WTC11 (cell line): ENCODE measurements at regions of chr10 and their contacts with region 1.

Region 1: GRCh38 chr10:97771055-97771811 is 566 bp downstream of the SFRP5 start:
- DNase-seq: peak; percentile 64
- ATAC-seq: peak; percentile 68
- H3K4me3 Mint-ChIP-seq: peak overlapping the region; percentile 76
- H3K27ac Mint-ChIP-seq: no peak overlapping the region
- H3K4me1 Mint-ChIP-seq: peaks cover 8% of the 10 kb centered on the region
- H3K27me3 Mint-ChIP-seq: peaks cover 63% of the 10 kb centered on the region
- CTCF ChIP-seq: no peak

Region 2: DNA sequence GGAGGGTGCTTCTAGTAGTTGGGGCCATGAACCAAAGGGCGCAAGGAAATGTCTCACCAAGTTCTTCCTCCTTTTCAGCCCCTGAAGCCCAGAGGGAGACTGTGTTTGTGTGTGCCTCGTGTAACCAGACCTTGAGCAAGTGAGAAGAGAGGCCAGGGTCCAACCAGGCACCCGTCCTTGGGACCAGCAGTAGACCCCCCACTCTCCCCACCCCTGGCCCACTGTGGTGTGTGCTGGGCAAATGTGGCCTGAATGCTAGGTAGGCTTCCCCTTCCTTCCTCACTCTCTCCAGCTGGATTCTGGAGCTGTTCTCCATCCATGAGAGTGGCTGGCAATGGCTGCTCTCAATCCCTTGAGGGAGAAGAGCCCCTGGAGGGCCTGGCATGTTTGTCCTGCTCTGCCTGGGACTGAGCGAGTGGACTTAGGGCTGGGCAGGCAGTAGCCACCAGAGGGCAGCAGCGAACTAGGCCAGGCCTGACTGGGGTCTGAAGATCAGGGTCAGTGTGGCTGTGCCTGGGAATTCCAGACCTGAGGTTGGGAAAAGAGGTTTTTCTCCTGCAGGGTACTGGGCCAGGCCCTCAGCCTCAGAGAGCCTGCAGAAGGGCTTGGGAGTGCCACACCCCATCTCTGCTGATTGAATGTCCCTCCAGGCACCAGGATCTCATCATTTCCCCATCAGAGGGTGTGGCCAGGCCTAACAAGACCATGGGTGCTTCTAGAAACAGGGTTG is 11.9 kb before region 1 on chr10:
- CTCF ChIA-PET with region 1: interaction called, 13 read pairs
- POLR2A ChIA-PET with region 1: no interaction called
- DNase-seq: peak; percentile 90
- ATAC-seq: peak; percentile 90
- H3K4me3 Mint-ChIP-seq: no peak overlapping the region
- H3K27ac Mint-ChIP-seq: peak overlapping the region; percentile 53; the same call in 1 of the 2 replicates
- H3K4me1 Mint-ChIP-seq: peaks cover 14% of the 10 kb centered on the region
- H3K27me3 Mint-ChIP-seq: no peaks in the 10 kb centered on the region
- CTCF ChIP-seq: peak; percentile 76